ENCODE measurements at regions of chr11 and their contacts with region 1.

Region 1: DNA sequence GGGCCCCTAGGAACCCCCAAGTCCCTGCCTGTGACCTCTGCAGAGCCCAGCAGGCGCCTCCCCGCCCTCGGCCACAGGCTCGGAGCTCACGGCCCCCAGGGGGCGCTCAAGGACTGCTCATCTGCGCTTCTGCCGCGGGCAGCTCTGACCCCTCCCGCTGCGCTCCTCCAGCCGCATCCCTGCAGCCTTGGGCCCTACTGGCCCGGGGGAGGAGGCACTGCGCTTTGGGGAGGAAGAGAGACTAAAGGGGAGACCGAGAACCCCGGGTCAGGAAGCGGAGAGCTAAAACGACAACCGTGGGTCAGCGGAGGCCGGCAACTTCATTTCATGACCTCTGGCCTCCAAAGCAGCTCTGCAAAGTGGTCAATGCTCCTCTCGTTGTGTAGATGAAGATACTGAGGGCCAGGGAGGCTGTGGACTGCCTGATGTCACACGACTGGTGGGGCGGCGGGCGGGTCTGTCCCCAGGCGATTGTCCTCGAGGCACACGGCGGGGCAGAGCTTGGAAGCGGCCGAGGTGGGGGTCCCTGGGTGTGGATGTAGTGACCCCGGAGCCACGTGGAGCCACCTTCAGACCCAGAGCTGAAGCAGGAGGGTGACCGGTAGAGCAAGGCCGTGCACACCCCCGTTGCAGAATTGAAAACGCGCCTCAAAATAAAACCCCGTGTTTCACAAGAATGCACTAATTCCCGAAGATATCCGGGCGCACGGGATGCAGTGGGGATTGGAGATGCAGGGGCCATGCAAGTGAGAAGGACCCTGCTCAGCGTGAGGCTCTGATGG is 2.7 kb upstream of the KRTAP5-6 start:
- DNase-seq: peak; percentile 85
- H3K4me3 Mint-ChIP-seq: no peak overlapping the region
- H3K27ac Mint-ChIP-seq: no peak overlapping the region
- H3K4me1 Mint-ChIP-seq: peaks cover 6% of the 10 kb centered on the region
- H3K27me3 Mint-ChIP-seq: peaks cover 27% of the 10 kb centered on the region

Region 2: GRCh38 chr11:1559119-1559951 is 134.9 kb before region 1 on chr11:
- CTCF ChIA-PET with region 1: no interaction called
- POLR2A ChIA-PET with region 1: no interaction called
- intact Hi-C with region 1: no loop called
- DNase-seq: peak; percentile 28
- H3K4me3 Mint-ChIP-seq: no peak overlapping the region
- H3K27ac Mint-ChIP-seq: no peak overlapping the region
- H3K4me1 Mint-ChIP-seq: no peaks in the 10 kb centered on the region
- H3K27me3 Mint-ChIP-seq: no peaks in the 10 kb centered on the region

Region 3: GRCh38 chr11:1586699-1587098 is 107.6 kb before region 1 on chr11:
- CTCF ChIA-PET with region 1: no interaction called
- POLR2A ChIA-PET with region 1: no interaction called
- intact Hi-C with region 1: no loop called
- DNase-seq: no peak
- H3K4me3 Mint-ChIP-seq: no peak overlapping the region
- H3K27ac Mint-ChIP-seq: no peak overlapping the region
- H3K4me1 Mint-ChIP-seq: peaks cover 21% of the 10 kb centered on the region
- H3K27me3 Mint-ChIP-seq: peaks cover 2% of the 10 kb centered on the region

Region 4: DNA sequence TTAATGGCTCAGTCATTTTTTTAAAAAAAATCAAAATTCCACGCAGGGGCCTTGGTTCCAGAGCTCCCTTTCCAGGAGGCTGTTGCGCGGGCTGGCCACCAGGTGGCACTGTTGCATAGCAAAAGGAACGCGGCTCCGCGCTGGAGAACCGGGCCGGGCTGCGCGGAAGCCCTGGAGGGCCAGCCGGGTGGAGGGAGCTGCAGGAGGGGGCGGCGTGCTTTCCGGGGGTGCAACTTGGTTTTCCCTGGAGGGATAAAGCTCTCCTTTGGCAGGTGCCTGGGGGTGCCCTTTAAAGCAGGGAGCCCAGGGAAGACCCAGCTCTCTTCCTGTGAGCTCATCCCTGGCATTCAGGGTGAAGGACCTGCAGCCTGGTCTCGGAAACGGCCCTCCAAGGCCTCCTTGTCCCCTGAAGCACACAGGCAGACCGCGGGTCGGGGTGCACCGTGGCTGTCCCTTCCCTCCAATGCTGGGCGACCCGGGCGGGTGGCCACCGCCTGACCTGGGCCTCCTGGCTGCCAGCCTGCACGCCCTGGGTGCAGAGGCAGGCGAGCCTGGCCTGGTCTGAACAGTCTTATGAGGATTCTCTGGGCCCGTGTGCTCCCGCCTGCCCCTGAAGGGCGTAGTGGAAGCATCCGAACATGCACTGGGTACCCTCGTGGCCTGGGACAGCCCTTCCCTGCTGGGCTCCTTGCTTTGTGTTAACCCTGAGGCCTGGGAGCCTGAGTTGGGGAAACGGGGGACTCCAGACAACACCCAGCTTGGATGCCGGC is 41.3 kb before region 1 on chr11:
- CTCF ChIA-PET with region 1: interaction called, 104 read pairs
- POLR2A ChIA-PET with region 1: interaction called, 3 read pairs
- intact Hi-C with region 1: loop called (anchors 5 kb)
- DNase-seq: peak; percentile 79
- H3K4me3 Mint-ChIP-seq: no peak overlapping the region
- H3K27ac Mint-ChIP-seq: no peak overlapping the region
- H3K4me1 Mint-ChIP-seq: no peaks in the 10 kb centered on the region
- H3K27me3 Mint-ChIP-seq: peaks cover 20% of the 10 kb centered on the region

Region 5: GRCh38 chr11:1717745-1718144 is 23.5 kb after region 1 on chr11:
- CTCF ChIA-PET with region 1: interaction called, 13 read pairs
- POLR2A ChIA-PET with region 1: no interaction called
- intact Hi-C with region 1: no loop called
- DNase-seq: no peak
- H3K4me3 Mint-ChIP-seq: no peak overlapping the region
- H3K27ac Mint-ChIP-seq: no peak overlapping the region
- H3K4me1 Mint-ChIP-seq: no peaks in the 10 kb centered on the region
- H3K27me3 Mint-ChIP-seq: peaks cover 6% of the 10 kb centered on the region

Region 6: DNA sequence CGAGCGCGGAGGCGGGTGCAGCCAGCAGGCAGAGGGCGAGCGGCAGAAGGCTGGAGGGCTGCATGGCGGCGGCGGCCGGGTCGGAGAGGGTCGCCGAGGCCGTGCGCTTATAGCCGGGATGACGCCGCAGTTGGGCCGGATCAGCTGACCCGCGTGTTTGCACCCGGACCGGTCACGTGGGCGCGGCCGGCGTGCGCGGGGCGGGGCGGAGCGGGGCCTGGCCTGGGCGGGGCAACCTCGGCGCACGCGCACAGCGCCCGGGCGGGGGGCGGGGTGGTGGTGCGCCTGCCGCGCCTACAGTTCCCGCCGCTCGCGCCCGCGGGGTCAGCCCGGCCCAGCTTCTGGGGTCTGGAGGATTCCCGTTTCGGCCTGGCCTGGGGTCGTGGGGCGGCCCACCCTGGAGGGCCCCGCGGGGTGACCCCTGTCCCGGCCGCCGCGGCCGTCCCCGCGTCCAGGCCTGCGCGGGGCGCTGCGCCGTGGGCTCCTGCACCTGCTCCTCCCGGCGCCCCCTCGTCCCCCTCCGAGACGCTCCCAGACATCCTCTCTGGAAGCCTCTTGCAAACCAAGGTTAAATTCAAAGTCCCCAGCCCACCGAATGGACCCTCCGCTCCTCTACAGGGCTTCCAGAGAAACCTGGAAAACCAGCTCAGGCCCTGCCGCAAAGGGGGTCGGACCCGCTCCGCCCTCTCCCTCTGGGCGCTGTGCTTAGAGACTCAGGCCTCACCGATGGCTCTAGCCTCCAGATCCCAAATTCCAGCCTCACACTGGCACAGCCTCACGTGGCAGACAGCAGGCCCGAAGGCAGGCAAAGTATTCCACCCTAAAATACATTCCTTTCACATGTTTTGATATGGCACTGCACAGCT is 69.8 kb after region 1 on chr11 and contains the start of gene CTSD:
- CTCF ChIA-PET with region 1: interaction called, 12 read pairs
- POLR2A ChIA-PET with region 1: no interaction called
- intact Hi-C with region 1: no loop called
- DNase-seq: peak; percentile 91
- H3K4me3 Mint-ChIP-seq: peak within 1 kb of the TSS; percentile 80
- H3K27ac Mint-ChIP-seq: peak within 1 kb of the TSS; percentile 62
- H3K4me1 Mint-ChIP-seq: peaks cover 33% of the 10 kb centered on the region
- H3K27me3 Mint-ChIP-seq: no peaks in the 10 kb centered on the region
- total RNA-seq, gene CTSD: 52.0 to 58.7 TPM

Region 7: GRCh38 chr11:1837171-1838076 is 143.2 kb after region 1 on chr11:
- CTCF ChIA-PET with region 1: interaction called, 488 read pairs
- POLR2A ChIA-PET with region 1: interaction called, 19 read pairs
- intact Hi-C with region 1: loop called (anchors 1 kb)
- DNase-seq: peak; percentile 83
- H3K4me3 Mint-ChIP-seq: no peak overlapping the region
- H3K27ac Mint-ChIP-seq: no peak overlapping the region
- H3K4me1 Mint-ChIP-seq: peaks cover 5% of the 10 kb centered on the region
- H3K27me3 Mint-ChIP-seq: peaks cover 3% of the 10 kb centered on the region

Region 8: DNA sequence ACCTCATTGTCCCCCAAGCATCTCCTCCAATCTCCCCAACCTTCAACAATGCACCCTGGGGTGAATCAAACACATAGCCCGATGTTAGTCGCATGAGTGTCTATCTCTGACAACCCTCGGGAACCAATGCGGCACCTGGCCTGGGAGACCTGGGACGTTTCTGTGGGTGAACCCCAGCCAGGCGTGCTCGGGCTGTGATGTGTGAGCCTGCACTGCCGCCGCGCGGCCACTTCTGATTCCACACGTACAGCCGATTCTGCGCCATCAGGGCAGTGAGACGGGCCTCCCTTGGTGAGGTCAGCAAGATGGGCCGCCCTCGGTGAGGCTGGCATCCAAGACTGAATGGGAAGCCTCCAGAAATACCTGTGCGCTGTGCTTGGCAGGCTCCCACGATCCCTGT is 308.6 kb after region 1 on chr11:
- CTCF ChIA-PET with region 1: interaction called, 106 read pairs
- POLR2A ChIA-PET with region 1: no interaction called
- intact Hi-C with region 1: no loop called
- DNase-seq: no peak
- H3K4me3 Mint-ChIP-seq: no peak overlapping the region
- H3K27ac Mint-ChIP-seq: no peak overlapping the region
- H3K4me1 Mint-ChIP-seq: no peaks in the 10 kb centered on the region
- H3K27me3 Mint-ChIP-seq: no peaks in the 10 kb centered on the region